ENCODE measurements at regions of chr1 and their contacts with region 1.

Region 1: GRCh38 chr1:170531758-170532657 is at the start of gene GORAB:
- DNase-seq: peak; percentile 92
- H3K4me3 ChIP-seq: peak within 1 kb of the TSS; percentile 47 to 82 (median 81)
- H3K27ac ChIP-seq: peak within 1 kb of the TSS; percentile 97
- H3K4me1 ChIP-seq: peaks cover 8% of the 10 kb centered on the region
- H3K27me3 ChIP-seq: no peaks in the 10 kb centered on the region
- CTCF ChIP-seq: no peak
- total RNA-seq, gene GORAB: 8.3 to 9.2 TPM

Region 2: GRCh38 chr1:170074250-170075157 is 457.5 kb before region 1 on chr1 and contains the start of gene KIFAP3:
- CTCF ChIA-PET with region 1: no interaction called
- dilution Hi-C with region 1: no loop called
- in situ Hi-C with region 1: no loop called
- intact Hi-C with region 1: loop called (anchors 5 kb)
- DNase-seq: peak; percentile 99
- H3K4me3 ChIP-seq: peak within 1 kb of the TSS; percentile 89 to 94 (median 93)
- H3K27ac ChIP-seq: peak within 1 kb of the TSS; percentile 84
- H3K4me1 ChIP-seq: peaks cover 5% of the 10 kb centered on the region
- H3K27me3 ChIP-seq: no peaks in the 10 kb centered on the region
- CTCF ChIP-seq: peak; percentile 52 to 67
- total RNA-seq, gene KIFAP3: 28.8 to 33.9 TPM

Region 3: GRCh38 chr1:170445096-170445495 is 86.9 kb before region 1 on chr1:
- CTCF ChIA-PET with region 1: no interaction called
- dilution Hi-C with region 1: no loop called
- in situ Hi-C with region 1: no loop called
- intact Hi-C with region 1: loop called (anchors 5 kb)
- DNase-seq: peak; percentile 59
- H3K4me3 ChIP-seq: no peak overlapping the region
- H3K27ac ChIP-seq: no peak overlapping the region
- H3K4me1 ChIP-seq: peaks cover 8% of the 10 kb centered on the region
- H3K27me3 ChIP-seq: peaks cover 4% of the 10 kb centered on the region
- CTCF ChIP-seq: no peak

Region 4: GRCh38 chr1:170495006-170495405 is 37.0 kb before region 1 on chr1:
- CTCF ChIA-PET with region 1: no interaction called
- dilution Hi-C with region 1: no loop called
- in situ Hi-C with region 1: no loop called
- intact Hi-C with region 1: no loop called
- DNase-seq: no peak
- H3K4me3 ChIP-seq: no peak overlapping the region
- H3K27ac ChIP-seq: no peak overlapping the region
- H3K4me1 ChIP-seq: peaks cover 12% of the 10 kb centered on the region
- H3K27me3 ChIP-seq: no peaks in the 10 kb centered on the region
- CTCF ChIP-seq: no peak

Region 5: DNA sequence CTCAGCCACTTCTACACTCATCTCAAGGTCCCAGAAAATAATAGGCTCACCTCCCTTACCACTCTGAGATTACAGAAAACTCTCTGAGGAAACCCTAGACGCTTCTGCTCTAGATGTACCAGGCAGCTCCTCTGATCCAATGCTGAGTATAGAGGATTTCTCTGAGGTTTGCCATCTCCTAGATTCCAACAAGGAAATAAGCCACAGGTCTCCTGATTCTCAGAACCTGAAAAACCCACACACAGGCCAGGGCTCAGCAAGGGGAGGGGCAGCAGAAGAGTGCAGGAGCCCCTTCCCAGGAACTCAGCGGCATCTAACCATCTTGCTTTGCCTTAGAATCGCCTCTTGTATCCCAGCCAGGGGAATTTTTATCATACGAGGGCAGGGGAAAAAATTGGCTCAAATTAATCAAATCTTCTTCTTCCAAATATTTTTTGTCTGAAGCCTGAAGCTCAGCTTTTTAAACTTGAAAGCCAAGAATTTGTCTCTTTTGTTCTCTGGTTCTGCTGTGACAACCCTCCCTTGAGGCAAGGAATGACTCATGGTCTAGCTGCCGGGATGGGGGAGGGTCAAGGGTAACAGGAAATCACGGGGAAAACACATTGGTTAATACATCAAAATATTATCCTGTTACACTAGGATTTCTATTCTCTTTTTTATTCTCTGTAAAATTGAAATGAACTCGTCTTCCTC is 30.8 kb after region 1 on chr1:
- CTCF ChIA-PET with region 1: no interaction called
- dilution Hi-C with region 1: no loop called
- in situ Hi-C with region 1: no loop called
- intact Hi-C with region 1: loop called (anchors 2 kb)
- DNase-seq: peak; percentile 80
- H3K4me3 ChIP-seq: no peak overlapping the region
- H3K27ac ChIP-seq: peak overlapping the region; percentile 53
- H3K4me1 ChIP-seq: peaks cover 15% of the 10 kb centered on the region
- H3K27me3 ChIP-seq: no peaks in the 10 kb centered on the region
- CTCF ChIP-seq: no peak

Region 6: DNA sequence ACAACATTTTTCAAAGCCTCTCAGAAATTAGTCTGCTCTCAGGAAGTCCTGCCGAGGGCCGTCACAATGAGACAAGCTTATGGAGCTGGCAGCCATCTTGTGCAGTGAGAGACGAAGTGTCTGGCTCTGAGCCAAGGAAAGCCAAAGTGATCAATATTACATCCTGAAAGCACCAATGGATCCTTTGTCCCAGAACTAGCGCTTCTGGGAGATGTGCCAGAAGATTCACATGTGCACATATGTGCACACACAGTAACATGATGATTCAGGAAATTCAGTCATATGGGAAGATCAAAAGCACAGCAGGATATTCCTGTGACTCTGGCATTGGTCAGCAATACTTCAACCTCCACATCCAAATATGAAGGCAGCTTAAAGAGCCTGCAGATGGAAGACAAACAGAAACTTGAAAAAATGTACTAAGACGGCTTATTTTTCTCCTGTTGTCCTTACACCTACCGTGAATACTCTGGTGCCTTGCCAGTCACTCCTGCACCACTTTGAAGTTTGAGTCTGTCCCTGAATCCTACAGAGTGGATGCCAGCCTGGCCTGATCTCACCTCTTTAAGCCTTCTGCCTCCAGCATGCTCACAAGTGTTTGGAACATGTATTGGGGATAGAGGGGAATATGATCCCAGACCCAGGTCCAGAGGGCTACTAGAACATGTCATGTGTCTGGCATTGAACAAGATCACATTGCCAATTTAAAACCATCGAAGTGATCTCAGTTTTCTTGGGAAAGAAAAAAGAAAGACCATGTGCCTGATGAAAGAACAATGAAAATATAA is 87.4 kb after region 1 on chr1:
- CTCF ChIA-PET with region 1: no interaction called
- dilution Hi-C with region 1: no loop called
- in situ Hi-C with region 1: no loop called
- intact Hi-C with region 1: loop called (anchors 5 kb)
- DNase-seq: peak; percentile 46
- H3K4me3 ChIP-seq: no peak overlapping the region
- H3K27ac ChIP-seq: no peak overlapping the region
- H3K4me1 ChIP-seq: peaks cover 20% of the 10 kb centered on the region
- H3K27me3 ChIP-seq: no peaks in the 10 kb centered on the region
- CTCF ChIP-seq: no peak

Region 7: GRCh38 chr1:170664828-170665612 is 133.0 kb after region 1 on chr1:
- CTCF ChIA-PET with region 1: no interaction called
- dilution Hi-C with region 1: no loop called
- in situ Hi-C with region 1: no loop called
- intact Hi-C with region 1: loop called (anchors 5 kb)
- DNase-seq: peak; percentile 20
- H3K4me3 ChIP-seq: peak overlapping the region; percentile 46 to 56 (median 53)
- H3K27ac ChIP-seq: no peak overlapping the region
- H3K4me1 ChIP-seq: peaks cover 9% of the 10 kb centered on the region
- H3K27me3 ChIP-seq: peaks cover 29% of the 10 kb centered on the region
- CTCF ChIP-seq: peak in 1 of 2 donors; percentile 44

Measured in mammary epithelial cell (primary cell).